Activated naive CD4-positive, alpha-beta T cell treated with anti-CD3 and anti-CD28 coated beads for 36 hours (primary cell): ENCODE measurements at regions of chr1 and their contacts with region 1.

Region 1: DNA sequence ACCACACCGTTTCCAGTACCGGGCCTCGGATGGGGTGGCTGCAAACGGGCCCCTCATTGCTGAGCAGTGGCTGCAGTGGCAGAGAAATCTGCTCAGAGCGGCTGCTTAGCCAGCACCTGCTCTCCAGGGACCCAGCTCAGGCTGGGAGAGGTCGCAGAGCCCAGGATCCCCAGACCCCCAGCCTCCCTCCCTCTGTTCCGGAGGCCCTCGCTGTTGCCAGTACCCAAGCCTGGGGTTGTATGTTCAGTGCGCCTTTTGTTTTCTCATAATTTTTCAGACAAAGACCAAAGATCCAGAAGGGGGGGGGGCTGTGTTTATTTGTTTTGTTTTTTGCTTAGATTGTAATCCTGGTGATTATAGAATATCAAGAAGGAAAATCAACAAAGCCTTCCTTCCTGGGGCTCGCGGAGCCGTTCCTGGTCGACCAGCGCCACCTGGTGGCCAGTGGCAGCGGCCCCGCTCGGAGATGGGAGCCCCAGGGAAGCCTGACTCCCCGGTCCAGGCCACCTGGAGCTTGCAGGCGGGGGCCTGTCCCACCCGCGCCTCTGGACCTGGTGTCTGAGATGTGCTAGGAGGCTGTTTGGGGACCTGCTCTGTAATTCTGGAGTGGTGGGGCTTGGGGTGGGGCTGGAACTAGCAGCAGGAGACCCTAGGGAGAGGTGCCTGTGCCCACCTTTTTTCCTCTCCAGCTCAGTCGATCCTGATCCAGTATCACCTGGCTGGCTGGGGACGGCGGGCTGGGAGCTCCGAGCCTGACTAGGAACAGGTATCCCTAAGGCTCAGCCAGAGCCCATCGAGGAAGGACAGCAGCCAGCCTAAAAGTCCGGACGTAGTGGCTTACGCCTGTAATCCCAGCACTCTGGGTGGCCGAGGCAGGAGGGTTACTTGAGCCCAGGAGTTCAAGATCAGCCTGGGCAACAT is 123.9 kb upstream of the VAMP3 start:
- DNase-seq: peak; percentile 76
- H3K4me3 Mint-ChIP-seq: no peak overlapping the region
- H3K27ac Mint-ChIP-seq: no peak overlapping the region
- H3K4me1 Mint-ChIP-seq: no peaks in the 10 kb centered on the region
- H3K27me3 Mint-ChIP-seq: no peaks in the 10 kb centered on the region

Region 2: GRCh38 chr1:6724516-6725141 is 922.6 kb before region 1 on chr1:
- CTCF ChIA-PET with region 1: interaction called, 4 read pairs
- intact Hi-C with region 1: loop called (anchors 5 kb)
- DNase-seq: no peak
- H3K4me3 Mint-ChIP-seq: no peak overlapping the region
- H3K27ac Mint-ChIP-seq: no peak overlapping the region
- H3K4me1 Mint-ChIP-seq: no peaks in the 10 kb centered on the region
- H3K27me3 Mint-ChIP-seq: peaks cover 3% of the 10 kb centered on the region

Region 3: DNA sequence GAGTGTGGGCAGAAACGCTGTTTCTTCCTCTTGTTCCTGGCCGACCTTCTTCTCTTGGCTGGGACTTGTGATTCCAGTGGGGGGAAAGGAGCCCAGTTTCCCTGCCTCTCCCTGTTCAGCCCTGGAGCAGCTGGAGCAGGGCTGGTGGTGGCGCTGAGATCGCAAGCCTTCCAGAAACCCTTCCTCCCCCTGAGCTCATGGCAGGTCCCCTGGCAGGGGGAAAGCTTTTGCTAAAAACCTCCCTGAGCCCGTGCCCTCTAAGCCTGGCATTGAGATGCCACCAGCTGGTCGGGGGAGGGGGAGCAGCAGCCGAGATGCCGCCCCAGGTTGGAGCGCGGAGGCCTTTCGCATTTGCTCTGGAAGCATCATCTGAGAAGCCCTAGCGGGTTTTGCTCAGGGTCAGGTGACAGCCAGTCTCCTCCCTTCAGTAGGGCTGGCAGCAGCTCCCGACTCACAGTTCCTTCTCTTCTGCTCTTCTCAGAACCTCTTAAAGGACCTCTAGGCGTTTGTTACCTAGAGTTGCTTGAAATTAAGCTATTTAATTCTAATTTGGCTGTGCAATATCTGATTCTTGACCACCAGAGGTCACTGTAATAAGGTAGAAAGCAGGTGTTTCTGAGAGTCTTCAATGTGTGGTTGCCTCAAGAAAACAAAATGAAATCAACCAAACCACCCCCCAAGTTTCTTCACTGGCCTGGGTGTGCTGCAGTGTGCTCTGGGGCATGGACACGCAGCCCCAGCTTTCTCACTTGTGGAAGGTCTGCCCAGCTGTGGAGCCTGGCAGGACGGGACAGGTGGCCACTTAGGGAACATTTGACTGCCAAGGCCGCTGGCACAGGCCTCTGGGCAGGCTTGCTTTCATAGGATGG is 604.7 kb before region 1 on chr1:
- CTCF ChIA-PET with region 1: no interaction called
- intact Hi-C with region 1: loop called (anchors 2 kb)
- DNase-seq: no peak
- H3K4me3 Mint-ChIP-seq: no peak overlapping the region
- H3K27ac Mint-ChIP-seq: no peak overlapping the region
- H3K4me1 Mint-ChIP-seq: no peaks in the 10 kb centered on the region
- H3K27me3 Mint-ChIP-seq: peaks cover 4% of the 10 kb centered on the region

Region 4: DNA sequence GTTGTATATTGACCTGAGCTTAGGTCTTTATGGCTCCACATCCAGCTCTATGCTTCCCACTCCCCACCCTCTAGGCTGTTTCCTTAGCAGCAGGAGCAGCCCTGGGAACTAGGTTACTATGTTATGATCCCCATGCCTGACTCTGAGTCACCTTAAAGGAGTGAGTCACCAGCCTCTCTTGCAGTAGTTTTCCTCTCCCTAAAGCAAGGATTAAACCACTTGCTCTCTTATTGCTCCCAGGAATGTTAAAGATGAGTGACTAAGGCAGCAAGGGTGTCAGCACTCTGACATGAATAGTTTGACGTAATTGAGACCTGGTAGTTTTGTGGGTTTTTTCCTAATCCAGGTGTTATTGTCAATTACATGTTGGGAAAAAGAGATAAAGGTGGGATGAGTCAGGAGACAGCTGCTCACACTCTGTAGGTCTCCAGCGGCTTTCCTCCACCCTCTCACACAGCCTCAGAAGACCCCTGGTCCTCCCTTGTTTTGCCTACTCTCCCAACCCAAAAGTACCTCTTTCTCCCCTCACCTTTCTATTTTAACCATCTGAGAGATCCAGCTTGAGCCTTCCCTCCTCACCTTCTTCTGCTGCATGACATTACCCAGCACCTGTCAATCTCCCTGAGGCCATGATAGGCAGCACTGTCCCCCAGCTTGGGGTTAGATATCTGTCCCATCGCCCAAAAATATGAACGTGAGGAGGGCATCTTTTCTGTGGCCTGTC is 245.3 kb before region 1 on chr1:
- CTCF ChIA-PET with region 1: no interaction called
- intact Hi-C with region 1: loop called (anchors 5 kb)
- DNase-seq: no peak
- H3K4me3 Mint-ChIP-seq: no peak overlapping the region
- H3K27ac Mint-ChIP-seq: no peak overlapping the region
- H3K4me1 Mint-ChIP-seq: no peaks in the 10 kb centered on the region
- H3K27me3 Mint-ChIP-seq: peaks cover 22% of the 10 kb centered on the region

Region 5: GRCh38 chr1:7454052-7454815 is 193.0 kb before region 1 on chr1:
- CTCF ChIA-PET with region 1: no interaction called
- intact Hi-C with region 1: loop called (anchors 2 kb)
- DNase-seq: peak; percentile 14
- H3K4me3 Mint-ChIP-seq: no peak overlapping the region
- H3K27ac Mint-ChIP-seq: no peak overlapping the region
- H3K4me1 Mint-ChIP-seq: no peaks in the 10 kb centered on the region
- H3K27me3 Mint-ChIP-seq: no peaks in the 10 kb centered on the region

Region 6: GRCh38 chr1:7549277-7550161 is 97.7 kb before region 1 on chr1:
- CTCF ChIA-PET with region 1: no interaction called
- intact Hi-C with region 1: loop called (anchors 10 kb)
- DNase-seq: peak; percentile 82
- H3K4me3 Mint-ChIP-seq: peak overlapping the region; percentile 49
- H3K27ac Mint-ChIP-seq: peak overlapping the region; percentile 94
- H3K4me1 Mint-ChIP-seq: peaks cover 13% of the 10 kb centered on the region
- H3K27me3 Mint-ChIP-seq: peaks cover 16% of the 10 kb centered on the region

Region 7: GRCh38 chr1:7606096-7606495 is 41.1 kb before region 1 on chr1:
- CTCF ChIA-PET with region 1: no interaction called
- intact Hi-C with region 1: no loop called
- DNase-seq: no peak
- H3K4me3 Mint-ChIP-seq: no peak overlapping the region
- H3K27ac Mint-ChIP-seq: no peak overlapping the region
- H3K4me1 Mint-ChIP-seq: no peaks in the 10 kb centered on the region
- H3K27me3 Mint-ChIP-seq: peaks cover 4% of the 10 kb centered on the region